ENCODE measurements at regions of chr22 and their contacts with region 1.

Region 1: DNA sequence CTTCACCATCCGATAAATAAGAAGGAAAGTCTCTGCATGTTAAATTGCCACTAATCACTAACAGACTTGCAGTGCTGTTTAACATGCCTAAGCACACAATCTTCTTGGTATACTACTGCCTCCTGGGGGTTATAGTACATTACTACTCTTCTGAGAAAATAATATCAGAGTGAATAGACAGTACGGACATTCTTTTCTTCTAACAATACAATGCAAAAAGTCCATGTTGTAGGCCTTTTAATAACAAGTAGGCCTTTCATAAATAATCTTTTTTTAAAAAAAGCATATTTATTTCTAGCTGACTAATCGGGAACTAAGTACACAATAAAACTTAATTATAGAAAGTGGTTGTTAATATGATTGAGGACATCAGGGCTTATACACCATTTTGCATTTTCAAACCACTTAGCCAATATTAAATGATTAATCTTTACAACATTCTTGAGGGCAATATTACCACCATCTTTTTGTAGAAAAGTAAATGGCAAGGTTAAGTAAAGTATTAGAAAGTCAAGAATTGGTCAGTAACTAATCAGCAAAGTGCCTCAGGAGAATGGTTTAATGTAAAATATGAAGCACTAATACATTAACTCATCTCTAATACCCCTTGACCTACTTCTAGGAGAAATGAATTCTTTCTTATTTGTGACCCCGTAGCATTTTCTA is 84.7 kb downstream of the TTC28 start:
- DNase-seq: no peak
- H3K4me3 Mint-ChIP-seq: no peak overlapping the region
- H3K27ac Mint-ChIP-seq: no peak overlapping the region
- H3K4me1 Mint-ChIP-seq: no peaks in the 10 kb centered on the region
- H3K27me3 Mint-ChIP-seq: peaks cover 12% of the 10 kb centered on the region

Region 2: GRCh38 chr22:28019881-28020871 is 574.8 kb before region 1 on chr22:
- CTCF ChIA-PET with region 1: interaction called, 18 read pairs
- DNase-seq: peak; percentile 75
- H3K4me3 Mint-ChIP-seq: no peak overlapping the region
- H3K27ac Mint-ChIP-seq: no peak overlapping the region
- H3K4me1 Mint-ChIP-seq: peaks cover 5% of the 10 kb centered on the region
- H3K27me3 Mint-ChIP-seq: no peaks in the 10 kb centered on the region

Region 3: DNA sequence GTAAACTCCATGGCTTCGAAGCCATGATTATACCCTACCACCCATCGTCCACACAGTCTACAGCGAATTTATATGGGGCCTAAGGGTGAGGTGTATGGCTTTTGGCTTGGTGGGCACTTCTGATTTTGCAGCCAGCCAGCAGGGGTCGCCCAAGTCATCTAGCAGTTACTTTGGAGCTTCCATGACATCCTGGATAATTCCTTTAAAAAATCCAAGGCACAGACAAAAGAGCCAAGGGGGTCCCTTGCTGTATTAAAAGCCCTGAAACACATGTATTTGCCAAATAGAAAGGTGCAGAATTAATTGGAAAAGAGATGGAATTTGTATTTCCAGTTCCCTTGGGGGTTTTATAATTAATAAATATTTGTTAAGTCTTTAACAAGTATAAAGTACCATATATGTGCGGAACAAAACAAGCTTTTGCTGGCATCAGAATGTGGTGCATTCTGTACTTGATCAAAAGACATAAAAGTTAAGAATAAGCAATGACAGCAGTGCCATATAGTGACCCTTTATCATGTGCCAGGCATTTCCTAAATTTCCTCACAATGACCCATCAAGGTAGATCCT is 543.1 kb before region 1 on chr22:
- CTCF ChIA-PET with region 1: interaction called, 10 read pairs
- DNase-seq: peak; percentile 56
- H3K4me3 Mint-ChIP-seq: no peak overlapping the region
- H3K27ac Mint-ChIP-seq: no peak overlapping the region
- H3K4me1 Mint-ChIP-seq: no peaks in the 10 kb centered on the region
- H3K27me3 Mint-ChIP-seq: peaks cover 11% of the 10 kb centered on the region

Measured in activated naive CD4-positive, alpha-beta T cell treated with anti-CD3 and anti-CD28 coated beads, Interleukin-2, amount 10 ng/mL, durations not matched to agents 7 days and 5 days (primary cell).